HAP-1 (cell line): ENCODE measurements at regions of chr3 and their contacts with region 1.

Region 1: GRCh38 chr3:73874601-73875369 is 250.0 kb upstream of the PDZRN3 start:
- DNase-seq: peak; percentile 68 to 98
- H3K4me3 ChIP-seq: no peak overlapping the region
- H3K4me1 ChIP-seq: peaks cover 28% of the 10 kb centered on the region
- H3K27me3 ChIP-seq: no peaks in the 10 kb centered on the region

Region 2: GRCh38 chr3:74067296-74067695 is 192.5 kb after region 1 on chr3:
- in situ Hi-C with region 1: loop called (anchors 10 kb)
- DNase-seq: peak; percentile 63 to 80
- H3K4me3 ChIP-seq: no peak overlapping the region
- H3K4me1 ChIP-seq: peaks cover 26% of the 10 kb centered on the region
- H3K27me3 ChIP-seq: no peaks in the 10 kb centered on the region